CD14-positive monocyte (primary cell): ENCODE measurements at regions of chr1 and their contacts with region 1.

Region 1: GRCh38 chr1:204411451-204412204 is at the start of gene PPP1R15B:
- DNase-seq: peak; percentile 97 to 100 (median 99)
- H3K4me3 ChIP-seq: peak within 1 kb of the TSS; percentile 93 to 95 (median 95)
- H3K4me3 Mint-ChIP-seq: peak within 1 kb of the TSS; percentile 97 to 99
- H3K27ac ChIP-seq: peak within 1 kb of the TSS; percentile 99 to 100
- H3K27ac Mint-ChIP-seq: peak within 1 kb of the TSS; percentile 100
- H3K4me1 ChIP-seq: peaks cover 31 to 50% of the 10 kb centered on the region in 2 donors
- H3K4me1 Mint-ChIP-seq: peaks cover 46% of the 10 kb centered on the region
- H3K27me3 ChIP-seq: no peaks in the 10 kb centered on the region
- H3K27me3 Mint-ChIP-seq: peaks cover 0 to 2% (median 0%) of the 10 kb centered on the region in 3 donors
- CTCF ChIP-seq: no peak
- polyA plus RNA-seq, gene PPP1R15B: 31.1 to 117 (median 31.8) TPM

Region 2: DNA sequence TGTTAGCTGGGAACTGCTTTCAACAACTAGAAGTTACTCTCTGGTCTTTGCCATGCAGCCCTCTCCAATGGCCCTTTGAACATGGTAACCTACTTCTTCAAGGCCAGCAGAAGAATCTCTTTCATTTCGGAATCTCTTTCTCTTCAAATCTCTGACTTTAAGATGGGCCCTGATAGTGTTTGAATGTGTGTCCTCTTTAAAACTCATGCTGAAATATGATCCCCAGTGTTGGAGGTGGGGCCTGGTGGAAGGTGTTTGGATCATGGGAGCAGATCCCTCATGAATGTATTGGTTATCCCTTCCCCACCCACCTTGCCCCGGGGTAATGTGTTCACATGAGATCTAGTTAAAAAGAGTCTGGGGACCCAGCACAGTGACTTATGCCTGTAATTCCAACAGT is 393.2 kb before region 1 on chr1:
- intact Hi-C with region 1: no loop called
- DNase-seq: no peak
- H3K4me3 ChIP-seq: no peak overlapping the region
- H3K4me3 Mint-ChIP-seq: no peak overlapping the region
- H3K27ac ChIP-seq: no peak overlapping the region
- H3K27ac Mint-ChIP-seq: no peak overlapping the region
- H3K4me1 ChIP-seq: no peaks in the 10 kb centered on the region
- H3K4me1 Mint-ChIP-seq: peaks cover 1% of the 10 kb centered on the region
- H3K27me3 ChIP-seq: no peaks in the 10 kb centered on the region
- H3K27me3 Mint-ChIP-seq: peaks cover 0 to 8% (median 5%) of the 10 kb centered on the region in 3 donors
- CTCF ChIP-seq: no peak

Region 3: GRCh38 chr1:204516180-204516879 is 104.7 kb after region 1 on chr1 and contains the start of gene MDM4:
- intact Hi-C with region 1: loop called in 1 of 2 experiments (anchors 5 kb)
- DNase-seq: peak; percentile 97 to 98 (median 97)
- H3K4me3 ChIP-seq: peak within 1 kb of the TSS; percentile 75 to 94 (median 91)
- H3K4me3 Mint-ChIP-seq: no peak within 1 kb of the TSS
- H3K27ac ChIP-seq: peak within 1 kb of the TSS; percentile 86 to 99
- H3K27ac Mint-ChIP-seq: no peak within 1 kb of the TSS
- H3K4me1 ChIP-seq: peaks cover 72 to 88% of the 10 kb centered on the region in 2 donors
- H3K4me1 Mint-ChIP-seq: peaks cover 73% of the 10 kb centered on the region
- H3K27me3 ChIP-seq: no peaks in the 10 kb centered on the region
- H3K27me3 Mint-ChIP-seq: no peaks in the 10 kb centered on the region
- CTCF ChIP-seq: no peak
- polyA plus RNA-seq, gene MDM4: 7.8 to 37.0 (median 10.2) TPM